Activated T-helper 2 cell treated with anti-CD3 and anti-CD28 coated beads, Interferon-gamma antibody, Interleukin-2, Interleukin-4, amounts not matched to agents 10 μg/mL and 5 μg/mL and 100 μg/mL, durations not matched to agents 14 hours and 24 hours and 36 hours (primary cell): ENCODE measurements at regions of chr6 and their contacts with region 1.

Region 1: GRCh38 chr6:154738551-154738961 is 5.3 kb downstream of the SCAF8 start:
- DNase-seq: no peak
- H3K4me3 Mint-ChIP-seq: no peak overlapping the region
- H3K27ac Mint-ChIP-seq: peak overlapping the region; percentile 36
- H3K4me1 Mint-ChIP-seq: peaks cover 35% of the 10 kb centered on the region
- H3K27me3 Mint-ChIP-seq: no peaks in the 10 kb centered on the region

Region 2: GRCh38 chr6:154705471-154706113 is 33.0 kb before region 1 on chr6:
- intact Hi-C with region 1: no loop called
- DNase-seq: no peak
- H3K4me3 Mint-ChIP-seq: no peak overlapping the region
- H3K27ac Mint-ChIP-seq: no peak overlapping the region
- H3K4me1 Mint-ChIP-seq: no peaks in the 10 kb centered on the region
- H3K27me3 Mint-ChIP-seq: peaks cover 22% of the 10 kb centered on the region

Region 3: DNA sequence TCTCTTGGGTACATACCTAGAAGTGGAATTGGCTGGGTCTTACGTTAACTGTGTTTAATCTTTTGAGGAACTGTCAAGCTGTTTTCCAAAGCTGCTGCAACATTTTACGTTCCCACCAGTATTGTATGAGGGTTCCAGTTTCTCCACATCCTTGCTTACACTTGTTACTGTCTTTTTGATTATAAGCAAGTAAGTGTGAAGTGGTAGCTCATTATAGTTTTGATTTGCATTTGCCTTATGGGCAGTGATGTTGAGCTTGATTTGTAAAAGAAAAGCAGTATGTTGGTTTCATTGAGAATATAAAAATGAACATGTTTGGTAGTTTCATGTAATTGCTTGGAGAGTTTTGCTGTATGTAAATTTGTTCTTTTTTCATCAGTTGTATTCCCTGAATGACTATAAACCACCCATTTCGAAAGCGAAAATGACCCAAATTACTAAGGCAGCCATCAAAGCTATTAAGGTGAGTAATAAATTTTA is 35.1 kb after region 1 on chr6:
- intact Hi-C with region 1: loop called (anchors 1 kb)
- DNase-seq: no peak
- H3K4me3 Mint-ChIP-seq: no peak overlapping the region
- H3K27ac Mint-ChIP-seq: no peak overlapping the region
- H3K4me1 Mint-ChIP-seq: peaks cover 20% of the 10 kb centered on the region
- H3K27me3 Mint-ChIP-seq: no peaks in the 10 kb centered on the region

Region 4: DNA sequence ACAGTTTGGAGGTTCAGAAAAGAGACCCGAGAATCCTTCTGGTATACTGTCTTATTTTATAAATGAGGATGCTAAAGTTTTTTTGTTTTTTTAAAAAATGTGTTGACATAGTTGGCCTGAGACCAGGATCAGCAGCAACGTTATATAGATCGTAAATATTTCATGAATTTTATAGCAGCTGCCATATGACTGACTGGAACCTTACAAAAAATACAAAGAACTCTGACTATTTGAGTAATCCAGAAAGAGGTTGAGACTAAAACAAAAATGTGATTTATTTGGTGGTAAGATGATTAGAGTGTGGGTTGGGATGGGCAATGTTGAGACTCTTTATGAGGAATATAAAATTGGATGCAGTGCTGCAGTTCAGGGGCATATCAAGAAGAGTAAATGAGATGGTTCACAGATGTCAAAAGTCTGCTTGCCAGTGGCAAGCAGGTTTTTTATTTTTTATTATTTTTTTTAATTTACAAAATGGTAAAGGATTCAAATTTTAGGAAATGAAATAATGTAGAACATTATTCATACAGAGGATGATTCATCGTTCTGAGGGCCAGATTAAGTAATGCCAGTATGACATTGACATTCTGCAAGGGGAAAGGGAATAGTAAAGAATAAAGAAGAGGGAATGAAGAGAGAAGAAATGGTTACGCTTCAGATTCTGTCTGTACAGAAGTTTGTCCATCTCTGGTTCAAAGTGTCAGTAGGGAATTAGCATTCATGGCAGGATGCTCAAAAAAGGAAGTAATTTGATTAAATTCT is 53.2 kb after region 1 on chr6:
- intact Hi-C with region 1: no loop called
- DNase-seq: no peak
- H3K4me3 Mint-ChIP-seq: no peak overlapping the region
- H3K27ac Mint-ChIP-seq: no peak overlapping the region
- H3K4me1 Mint-ChIP-seq: peaks cover 10% of the 10 kb centered on the region
- H3K27me3 Mint-ChIP-seq: no peaks in the 10 kb centered on the region

Region 5: DNA sequence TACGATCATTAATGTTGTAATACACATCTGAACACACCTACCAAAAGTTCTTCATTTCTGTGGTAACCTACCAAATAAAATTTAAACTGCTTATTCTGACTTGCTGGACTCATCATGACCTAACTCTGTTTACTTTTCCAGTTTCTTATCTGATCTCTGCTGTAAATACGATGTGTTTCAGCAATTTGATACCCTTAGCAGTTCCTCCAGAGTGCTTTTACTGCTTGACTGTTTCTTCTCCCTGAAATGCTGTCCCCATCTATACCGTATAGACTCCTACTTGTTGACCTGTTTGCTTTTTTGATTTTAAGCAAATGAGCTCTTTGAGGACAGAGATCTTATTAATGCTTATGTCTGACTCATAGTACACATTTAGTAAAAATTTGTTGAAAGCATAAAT is 114.1 kb after region 1 on chr6:
- intact Hi-C with region 1: no loop called
- DNase-seq: no peak
- H3K4me3 Mint-ChIP-seq: no peak overlapping the region
- H3K27ac Mint-ChIP-seq: no peak overlapping the region
- H3K4me1 Mint-ChIP-seq: peaks cover 4% of the 10 kb centered on the region
- H3K27me3 Mint-ChIP-seq: no peaks in the 10 kb centered on the region